ENCODE measurements at regions of chr19 and their contacts with region 1.

Region 1: DNA sequence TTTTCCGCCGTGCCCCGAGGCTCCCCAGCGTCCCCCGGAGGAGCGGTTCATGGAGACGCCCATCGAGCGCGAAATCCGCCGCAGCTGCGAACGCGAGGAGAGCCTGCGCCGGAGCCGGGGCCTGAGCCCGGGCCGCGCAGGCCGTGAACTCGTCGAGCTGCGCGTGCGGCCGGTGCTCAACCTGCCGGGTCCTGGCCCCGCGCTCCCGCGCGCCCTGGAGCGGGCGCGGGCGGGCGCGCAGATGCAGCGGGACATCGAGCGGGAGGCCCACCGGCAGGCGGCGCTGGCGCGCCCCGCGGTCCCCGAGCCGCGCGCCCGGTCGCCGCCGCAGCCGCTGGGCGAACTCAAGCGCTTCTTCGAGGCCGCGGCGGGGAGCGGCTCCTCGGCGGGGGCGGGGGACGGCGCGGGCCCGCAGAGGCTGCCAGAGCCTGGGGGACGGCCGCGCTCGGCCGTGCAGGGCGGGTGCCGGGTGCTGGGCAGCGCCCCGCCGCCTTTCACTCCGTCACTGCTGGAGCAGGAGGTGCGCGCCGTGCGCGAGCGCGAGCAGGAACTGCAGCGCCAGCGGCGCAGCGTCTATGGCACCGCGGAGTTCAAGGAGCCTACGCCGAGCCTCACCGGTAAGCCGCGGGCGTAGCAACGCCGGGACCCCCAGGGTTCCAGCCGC is 807 bp downstream of the MISP3 start:
- DNase-seq: peak; percentile 80 to 88 (median 84)
- H3K4me3 ChIP-seq: peak overlapping the region; percentile 70 to 90
- H3K4me3 Mint-ChIP-seq: peak overlapping the region; percentile 89 to 98 (median 93)
- H3K27ac ChIP-seq: peak overlapping the region; percentile 61
- H3K27ac Mint-ChIP-seq: peak overlapping the region; percentile 70 to 97 (median 88)
- H3K4me1 ChIP-seq: peaks cover 31% of the 10 kb centered on the region
- H3K4me1 Mint-ChIP-seq: peaks cover 7 to 28% (median 15%) of the 10 kb centered on the region in 4 donors
- H3K27me3 ChIP-seq: no peaks in the 10 kb centered on the region
- H3K27me3 Mint-ChIP-seq: no peaks in the 10 kb centered on the region

Region 2: DNA sequence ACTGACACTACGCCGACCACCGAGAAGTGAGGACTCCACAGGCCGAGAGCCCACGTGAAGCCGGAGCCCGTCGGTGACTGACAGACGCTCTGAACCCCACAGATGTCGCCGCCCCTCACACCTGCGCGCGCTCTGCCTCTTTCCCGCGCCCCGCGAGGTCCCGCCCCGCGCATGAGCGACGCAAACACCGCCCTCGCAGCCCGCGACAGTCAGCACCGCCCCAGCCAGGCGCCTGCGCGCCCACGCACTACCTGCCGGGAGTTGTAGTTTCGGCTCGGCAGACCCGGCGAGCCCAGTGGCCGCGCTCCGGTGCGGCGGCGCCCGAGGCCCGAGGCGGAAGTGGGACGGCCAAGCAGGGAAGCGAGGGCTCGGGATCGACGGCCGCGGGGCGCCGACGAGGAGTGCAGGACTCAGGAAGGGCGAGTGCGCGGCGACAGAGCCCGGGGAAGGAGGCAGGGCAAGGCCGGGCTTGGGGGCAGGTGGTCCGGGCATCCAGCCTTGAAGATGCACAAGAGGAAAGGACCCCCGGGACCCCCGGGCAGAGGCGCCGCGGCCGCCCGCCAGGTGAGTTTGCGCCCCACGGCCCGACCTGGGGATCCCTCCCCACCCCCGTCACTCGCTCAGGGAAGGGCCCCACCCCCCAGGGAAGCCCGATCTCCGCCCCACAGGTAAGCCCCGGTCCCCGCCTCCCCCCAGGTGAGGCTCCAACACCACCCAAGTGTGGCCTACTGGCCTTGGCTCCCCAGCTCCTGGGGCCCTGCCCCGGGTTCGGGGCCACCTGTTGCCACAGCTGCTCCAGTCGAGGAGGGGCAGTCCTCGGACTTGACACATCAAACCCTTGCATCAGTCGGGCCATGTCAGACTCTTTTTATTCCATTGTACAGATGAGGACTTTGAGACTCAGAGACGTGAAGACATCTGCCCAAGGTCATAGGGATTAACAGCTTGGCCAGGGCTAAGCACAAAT is 167.2 kb before region 1 on chr19 and contains the starts of genes BRME1 and CC2D1A:
- CTCF ChIA-PET with region 1: interaction called, 6 read pairs
- POLR2A ChIA-PET with region 1: interaction called, 3 read pairs
- intact Hi-C with region 1: loop called (anchors 1 kb)
- DNase-seq: peak; percentile 91 to 92 (median 92)
- H3K4me3 ChIP-seq: peak within 1 kb of the TSS; percentile 34 to 79
- H3K4me3 Mint-ChIP-seq: peak within 1 kb of the TSS; percentile 82 to 93 (median 88)
- H3K27ac ChIP-seq: peak within 1 kb of the TSS; percentile 77
- H3K27ac Mint-ChIP-seq: peak within 1 kb of the TSS; percentile 73 to 98 (median 94)
- H3K4me1 ChIP-seq: peaks cover 15% of the 10 kb centered on the region
- H3K4me1 Mint-ChIP-seq: peaks cover 10 to 21% (median 13%) of the 10 kb centered on the region in 4 donors
- H3K27me3 ChIP-seq: no peaks in the 10 kb centered on the region
- H3K27me3 Mint-ChIP-seq: no peaks in the 10 kb centered on the region
- total RNA-seq, gene BRME1: 3.1 to 3.8 TPM
- total RNA-seq, gene CC2D1A: 32.9 to 37.1 TPM

Region 3: GRCh38 chr19:14031719-14032480 is 41.5 kb before region 1 on chr19 and contains the start of gene IL27RA:
- CTCF ChIA-PET with region 1: interaction called, 8 read pairs
- POLR2A ChIA-PET with region 1: interaction called, 20 read pairs
- intact Hi-C with region 1: loop called (anchors 2 kb)
- DNase-seq: peak; percentile 84 to 88 (median 87)
- H3K4me3 ChIP-seq: peak within 1 kb of the TSS; percentile 70 to 97
- H3K4me3 Mint-ChIP-seq: peak within 1 kb of the TSS; percentile 89 to 97 (median 94)
- H3K27ac ChIP-seq: peak within 1 kb of the TSS; percentile 96
- H3K27ac Mint-ChIP-seq: peak within 1 kb of the TSS; percentile 93 to 99 (median 98)
- H3K4me1 ChIP-seq: peaks cover 30% of the 10 kb centered on the region
- H3K4me1 Mint-ChIP-seq: peaks cover 23 to 56% (median 37%) of the 10 kb centered on the region in 4 donors
- H3K27me3 ChIP-seq: no peaks in the 10 kb centered on the region
- H3K27me3 Mint-ChIP-seq: no peaks in the 10 kb centered on the region
- total RNA-seq, gene IL27RA: 74.3 to 76.2 TPM

Region 4: DNA sequence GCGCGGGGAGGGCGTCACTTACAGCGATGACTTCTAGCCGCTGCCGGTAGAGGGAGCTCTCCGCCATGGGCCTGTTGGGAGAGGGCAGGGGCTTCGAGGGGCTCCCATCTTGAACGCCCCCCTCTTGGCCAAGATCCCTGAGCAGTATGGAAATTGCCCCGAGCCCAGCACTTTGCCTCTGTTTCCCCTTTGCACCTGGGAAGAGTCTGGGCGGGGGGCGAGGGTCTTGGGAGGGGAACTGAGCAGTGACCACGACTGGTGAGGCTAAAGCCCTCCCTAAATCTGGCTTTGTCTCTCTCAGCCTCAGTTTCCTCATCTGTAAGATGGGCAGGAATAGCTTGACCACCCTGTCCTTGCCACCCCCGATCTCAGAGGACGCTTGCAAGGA is 14.3 kb before region 1 on chr19:
- CTCF ChIA-PET with region 1: interaction called, 65 read pairs
- POLR2A ChIA-PET with region 1: interaction called, 8 read pairs
- intact Hi-C with region 1: loop called (anchors 2 kb)
- DNase-seq: peak in 4 of 5 donors; percentile 20 to 43 (median 42)
- H3K4me3 ChIP-seq: no peak overlapping the region
- H3K4me3 Mint-ChIP-seq: peak overlapping the region in 7 of 8 donors; percentile 42 to 84 (median 61)
- H3K27ac ChIP-seq: no peak overlapping the region
- H3K27ac Mint-ChIP-seq: peak overlapping the region in 1 of 7 donors; percentile 40
- H3K4me1 ChIP-seq: peaks cover 18% of the 10 kb centered on the region
- H3K4me1 Mint-ChIP-seq: peaks cover 9 to 28% (median 16%) of the 10 kb centered on the region in 4 donors
- H3K27me3 ChIP-seq: peaks cover 17% of the 10 kb centered on the region
- H3K27me3 Mint-ChIP-seq: peaks cover 13 to 22% of the 10 kb centered on the region in 2 donors

Region 5: DNA sequence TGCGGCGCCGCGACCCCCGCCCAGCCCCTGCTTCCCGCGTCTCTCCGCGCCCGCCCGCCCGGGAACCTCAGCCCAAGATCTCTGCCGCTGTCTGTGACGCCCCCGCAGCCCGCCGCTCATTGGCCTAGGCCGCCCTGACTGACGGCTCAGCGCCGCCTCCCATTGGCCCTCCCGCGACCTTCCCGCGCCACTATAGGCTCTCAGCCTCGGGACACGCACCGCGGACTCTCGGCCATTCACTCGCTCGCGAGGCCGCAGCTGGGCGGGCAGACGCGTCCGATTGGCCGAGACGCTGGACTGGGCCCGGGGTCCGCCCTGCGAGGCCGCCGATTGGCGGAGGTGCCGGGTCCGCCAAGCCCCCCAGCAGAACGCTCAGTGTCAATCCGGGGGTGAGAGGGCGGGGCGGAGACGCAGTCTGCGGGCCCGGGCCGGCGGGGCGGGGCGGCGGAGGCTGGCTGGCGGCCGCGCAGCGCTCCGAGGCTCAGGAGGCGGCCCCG is 44.3 kb after region 1 on chr19 and contains the start of gene PRKACA:
- CTCF ChIA-PET with region 1: interaction called, 7 read pairs
- POLR2A ChIA-PET with region 1: interaction called, 8 read pairs
- intact Hi-C with region 1: loop called (anchors 2 kb)
- DNase-seq: peak; percentile 97 to 99 (median 99)
- H3K4me3 ChIP-seq: peak within 1 kb of the TSS; percentile 57 to 63
- H3K4me3 Mint-ChIP-seq: peak within 1 kb of the TSS; percentile 92 to 98 (median 96)
- H3K27ac ChIP-seq: peak within 1 kb of the TSS; percentile 73
- H3K27ac Mint-ChIP-seq: peak within 1 kb of the TSS; percentile 95 to 98 (median 98)
- H3K4me1 ChIP-seq: peaks cover 41% of the 10 kb centered on the region
- H3K4me1 Mint-ChIP-seq: peaks cover 23 to 50% (median 39%) of the 10 kb centered on the region in 4 donors
- H3K27me3 ChIP-seq: no peaks in the 10 kb centered on the region
- H3K27me3 Mint-ChIP-seq: no peaks in the 10 kb centered on the region
- total RNA-seq, gene PRKACA: 48.9 to 51.7 TPM

Measured in CD4-positive, alpha-beta memory T cell (primary cell).